Naive thymus-derived CD4-positive, alpha-beta T cell (primary cell): ENCODE measurements at regions of chr3 and their contacts with region 1.

Region 1: DNA sequence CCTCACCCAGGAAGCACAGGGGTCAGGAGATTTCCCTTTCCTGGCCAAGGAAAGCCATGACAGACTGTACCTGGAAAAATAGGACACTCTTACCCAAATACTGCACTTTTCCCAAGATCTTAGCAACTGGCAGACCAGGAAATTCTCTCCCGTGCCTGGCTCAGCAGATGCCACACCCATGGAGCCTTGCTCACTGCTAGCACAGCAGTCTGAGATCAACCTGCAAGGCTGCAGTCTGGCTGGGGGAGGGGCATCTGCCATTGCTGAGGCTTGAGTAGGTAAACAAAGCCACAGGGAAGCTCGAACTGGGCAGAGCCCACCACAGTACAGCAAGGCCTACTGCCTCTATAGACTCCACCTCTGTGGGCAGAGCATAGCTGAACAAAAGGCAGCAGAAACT is 567.3 kb upstream of the LMCD1 start:
- DNase-seq: no peak
- ATAC-seq: no peak
- H3K4me3 ChIP-seq: no peak overlapping the region
- H3K4me3 Mint-ChIP-seq: no peak overlapping the region
- H3K27ac ChIP-seq: no peak overlapping the region
- H3K27ac Mint-ChIP-seq: no peak overlapping the region
- H3K4me1 ChIP-seq: no peaks in the 10 kb centered on the region
- H3K4me1 Mint-ChIP-seq: peaks cover 0 to 9% (median 0%) of the 10 kb centered on the region in 7 donors
- H3K27me3 ChIP-seq: no peaks in the 10 kb centered on the region
- H3K27me3 Mint-ChIP-seq: no peaks in the 10 kb centered on the region

Region 2: GRCh38 chr3:7657214-7658112 is 276.9 kb before region 1 on chr3:
- CTCF ChIA-PET with region 1: no interaction called
- POLR2A ChIA-PET with region 1: no interaction called
- intact Hi-C with region 1: loop called in 1 of 2 experiments (anchors 5 kb)
- DNase-seq: no peak
- ATAC-seq: no peak
- H3K4me3 ChIP-seq: no peak overlapping the region
- H3K4me3 Mint-ChIP-seq: no peak overlapping the region
- H3K27ac ChIP-seq: no peak overlapping the region
- H3K27ac Mint-ChIP-seq: no peak overlapping the region
- H3K4me1 ChIP-seq: no peaks in the 10 kb centered on the region
- H3K4me1 Mint-ChIP-seq: no peaks in the 10 kb centered on the region
- H3K27me3 ChIP-seq: no peaks in the 10 kb centered on the region
- H3K27me3 Mint-ChIP-seq: peaks cover 0 to 15% (median 4%) of the 10 kb centered on the region in 5 donors